PC-9 (cell line): ENCODE measurements at regions of chr14 and their contacts with region 1.

Region 1: GRCh38 chr14:35390577-35391387 is 13.8 kb downstream of the NFKBIA start:
- DNase-seq: peak; percentile 63 to 92
- H3K4me3 ChIP-seq: no peak overlapping the region
- H3K27ac ChIP-seq: peak overlapping the region; percentile 50
- H3K4me1 ChIP-seq: peaks cover 14% of the 10 kb centered on the region
- H3K27me3 ChIP-seq: no peaks in the 10 kb centered on the region
- CTCF ChIP-seq: no peak

Region 2: GRCh38 chr14:35236806-35237205 is 154.0 kb before region 1 on chr14:
- CTCF ChIA-PET with region 1: no interaction called
- POLR2A ChIA-PET with region 1: interaction called, 12 read pairs
- intact Hi-C with region 1: no loop called
- DNase-seq: no peak
- H3K4me3 ChIP-seq: no peak overlapping the region
- H3K27ac ChIP-seq: no peak overlapping the region
- H3K4me1 ChIP-seq: no peaks in the 10 kb centered on the region
- H3K27me3 ChIP-seq: no peaks in the 10 kb centered on the region
- CTCF ChIP-seq: no peak

Region 3: DNA sequence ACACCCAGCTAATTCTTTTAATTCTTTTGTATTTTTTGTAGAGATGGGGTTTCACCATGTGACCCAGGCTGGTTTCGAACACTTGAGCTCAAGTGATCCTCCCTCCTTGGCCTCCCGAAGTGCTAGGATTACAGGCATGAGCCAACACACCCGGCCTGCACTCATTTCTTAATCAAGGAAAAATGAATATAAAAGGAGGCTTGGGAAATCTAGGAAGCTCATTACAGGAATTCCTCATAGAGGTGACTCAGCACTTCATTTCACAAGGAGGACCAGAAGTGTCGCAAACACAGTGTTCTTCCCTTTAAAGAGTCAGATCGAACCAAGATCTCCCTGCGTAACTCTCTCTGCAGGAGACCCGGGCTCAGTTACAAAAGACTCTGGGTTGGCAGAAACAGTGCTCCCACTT is 16.5 kb before region 1 on chr14:
- CTCF ChIA-PET with region 1: interaction called, 3 read pairs
- POLR2A ChIA-PET with region 1: interaction called, 24 read pairs
- intact Hi-C with region 1: no loop called
- DNase-seq: peak; percentile 49 to 92
- H3K4me3 ChIP-seq: no peak overlapping the region
- H3K27ac ChIP-seq: peak overlapping the region; percentile 72
- H3K4me1 ChIP-seq: peaks cover 21% of the 10 kb centered on the region
- H3K27me3 ChIP-seq: no peaks in the 10 kb centered on the region
- CTCF ChIP-seq: no peak

Region 4: GRCh38 chr14:35446450-35446849 is 55.7 kb after region 1 on chr14:
- CTCF ChIA-PET with region 1: no interaction called
- POLR2A ChIA-PET with region 1: no interaction called
- intact Hi-C with region 1: no loop called
- DNase-seq: no peak
- H3K4me3 ChIP-seq: no peak overlapping the region
- H3K27ac ChIP-seq: no peak overlapping the region
- H3K4me1 ChIP-seq: no peaks in the 10 kb centered on the region
- H3K27me3 ChIP-seq: no peaks in the 10 kb centered on the region
- CTCF ChIP-seq: no peak

Region 5: DNA sequence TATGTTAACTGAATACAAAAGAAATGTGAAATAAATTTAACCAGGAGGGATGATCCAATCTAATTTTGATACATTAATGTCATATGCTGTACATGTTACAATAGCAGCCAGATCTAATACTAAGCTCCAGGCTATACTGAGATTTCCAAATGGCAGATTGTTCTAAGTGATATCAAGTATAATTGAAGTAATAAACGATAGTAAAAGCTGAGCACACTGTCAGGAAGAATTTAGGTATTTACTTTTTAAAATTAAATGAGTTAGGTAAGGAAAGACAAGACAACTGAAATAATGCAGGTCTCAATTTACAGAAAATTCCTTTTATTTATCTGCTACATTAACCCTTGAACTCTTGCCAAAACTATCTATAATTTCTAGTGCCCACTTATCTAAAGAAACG is 183.1 kb after region 1 on chr14:
- CTCF ChIA-PET with region 1: no interaction called
- POLR2A ChIA-PET with region 1: no interaction called
- intact Hi-C with region 1: no loop called
- DNase-seq: no peak
- H3K4me3 ChIP-seq: no peak overlapping the region
- H3K27ac ChIP-seq: no peak overlapping the region
- H3K4me1 ChIP-seq: no peaks in the 10 kb centered on the region
- H3K27me3 ChIP-seq: no peaks in the 10 kb centered on the region
- CTCF ChIP-seq: no peak